ENCODE measurements at regions of chr1 and their contacts with region 1.

Region 1: DNA sequence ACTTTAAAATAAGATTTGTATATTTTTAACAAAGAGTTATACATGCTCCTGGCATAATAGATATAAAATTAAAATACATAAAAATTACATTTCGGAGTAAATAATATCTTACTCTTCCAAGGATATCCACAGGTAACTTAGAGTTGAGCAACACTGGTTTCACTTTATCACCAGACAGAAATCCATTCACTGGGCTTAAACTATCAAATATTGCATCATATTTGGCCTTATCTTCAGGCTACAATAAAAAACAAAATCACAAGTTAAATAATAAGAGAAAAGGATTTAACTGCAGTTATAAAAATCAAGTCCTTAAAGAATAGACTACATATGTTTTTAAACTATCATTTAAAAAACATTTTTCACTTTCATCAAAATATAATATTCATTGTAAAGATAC is 55.5 kb downstream of the EPS15 start:
- DNase-seq: no peak
- ATAC-seq: no peak
- H3K4me3 ChIP-seq: no peak overlapping the region
- H3K4me3 Mint-ChIP-seq: no peak overlapping the region
- H3K27ac ChIP-seq: no peak overlapping the region
- H3K27ac Mint-ChIP-seq: no peak overlapping the region
- H3K4me1 ChIP-seq: no peaks in the 10 kb centered on the region
- H3K4me1 Mint-ChIP-seq: peaks cover 0 to 6% (median 3%) of the 10 kb centered on the region in 3 donors
- H3K27me3 ChIP-seq: no peaks in the 10 kb centered on the region
- H3K27me3 Mint-ChIP-seq: no peaks in the 10 kb centered on the region

Region 2: GRCh38 chr1:51344602-51345299 is 118.8 kb before region 1 on chr1:
- CTCF ChIA-PET with region 1: no interaction called
- POLR2A ChIA-PET with region 1: no interaction called
- DNase-seq: no peak
- ATAC-seq: no peak
- H3K4me3 ChIP-seq: no peak overlapping the region
- H3K4me3 Mint-ChIP-seq: no peak overlapping the region
- H3K27ac ChIP-seq: no peak overlapping the region
- H3K27ac Mint-ChIP-seq: no peak overlapping the region
- H3K4me1 ChIP-seq: peaks cover 0 to 7% of the 10 kb centered on the region in 2 experiments
- H3K4me1 Mint-ChIP-seq: peaks cover 0 to 5% (median 0%) of the 10 kb centered on the region in 3 donors
- H3K27me3 ChIP-seq: peaks cover 2 to 55% of the 10 kb centered on the region in 2 experiments
- H3K27me3 Mint-ChIP-seq: peaks cover 41 to 48% of the 10 kb centered on the region in 2 donors

Region 3: GRCh38 chr1:51525295-51525694 is 61.7 kb after region 1 on chr1:
- CTCF ChIA-PET with region 1: interaction called in 1 of 2 experiments, 11 read pairs
- POLR2A ChIA-PET with region 1: no interaction called
- DNase-seq: no peak
- ATAC-seq: no peak
- H3K4me3 ChIP-seq: no peak overlapping the region
- H3K4me3 Mint-ChIP-seq: no peak overlapping the region
- H3K27ac ChIP-seq: no peak overlapping the region
- H3K27ac Mint-ChIP-seq: no peak overlapping the region
- H3K4me1 ChIP-seq: peaks cover 0 to 4% of the 10 kb centered on the region in 2 experiments
- H3K4me1 Mint-ChIP-seq: peaks cover 9 to 11% (median 10%) of the 10 kb centered on the region in 3 donors
- H3K27me3 ChIP-seq: peaks cover 0 to 2% of the 10 kb centered on the region in 2 experiments
- H3K27me3 Mint-ChIP-seq: no peaks in the 10 kb centered on the region

Region 4: GRCh38 chr1:51578383-51579082 is 115.0 kb after region 1 on chr1:
- CTCF ChIA-PET with region 1: no interaction called
- POLR2A ChIA-PET with region 1: interaction called in 1 of 2 experiments, 11 read pairs
- DNase-seq: no peak
- ATAC-seq: no peak
- H3K4me3 ChIP-seq: no peak overlapping the region
- H3K4me3 Mint-ChIP-seq: no peak overlapping the region
- H3K27ac ChIP-seq: no peak overlapping the region
- H3K27ac Mint-ChIP-seq: no peak overlapping the region
- H3K4me1 ChIP-seq: peaks cover 9 to 12% of the 10 kb centered on the region in 2 experiments
- H3K4me1 Mint-ChIP-seq: peaks cover 20 to 30% (median 27%) of the 10 kb centered on the region in 3 donors
- H3K27me3 ChIP-seq: no peaks in the 10 kb centered on the region
- H3K27me3 Mint-ChIP-seq: no peaks in the 10 kb centered on the region

Region 5: GRCh38 chr1:52002038-52002917 is 538.7 kb after region 1 on chr1:
- CTCF ChIA-PET with region 1: no interaction called
- POLR2A ChIA-PET with region 1: interaction called in 1 of 2 experiments, 13 read pairs
- DNase-seq: peak in 23 of 35 experiments; percentile 4 to 87 (median 25)
- ATAC-seq: peak; percentile 84 to 90 (median 85)
- H3K4me3 ChIP-seq: no peak overlapping the region
- H3K4me3 Mint-ChIP-seq: no peak overlapping the region
- H3K27ac ChIP-seq: no peak overlapping the region
- H3K27ac Mint-ChIP-seq: no peak overlapping the region
- H3K4me1 ChIP-seq: no peaks in the 10 kb centered on the region
- H3K4me1 Mint-ChIP-seq: no peaks in the 10 kb centered on the region
- H3K27me3 ChIP-seq: peaks cover 3 to 5% of the 10 kb centered on the region in 2 experiments
- H3K27me3 Mint-ChIP-seq: peaks cover 19 to 35% of the 10 kb centered on the region in 2 donors